ENCODE measurements at regions of chr7 and their contacts with region 1.

Region 1: GRCh38 chr7:139230774-139231512 is at the start of gene UBN2:
- DNase-seq: peak; percentile 97
- H3K4me3 Mint-ChIP-seq: peak within 1 kb of the TSS; percentile 97
- H3K27ac Mint-ChIP-seq: peak within 1 kb of the TSS; percentile 90
- H3K4me1 Mint-ChIP-seq: peaks cover 27% of the 10 kb centered on the region
- H3K27me3 Mint-ChIP-seq: peaks cover 5% of the 10 kb centered on the region
- total RNA-seq, gene UBN2: 11.3 to 13.3 TPM

Region 2: GRCh38 chr7:139068544-139069399 is 162.2 kb before region 1 on chr7:
- CTCF ChIA-PET with region 1: no interaction called
- POLR2A ChIA-PET with region 1: no interaction called
- intact Hi-C with region 1: loop called (anchors 1 kb)
- DNase-seq: peak; percentile 30
- H3K4me3 Mint-ChIP-seq: no peak overlapping the region
- H3K27ac Mint-ChIP-seq: peak overlapping the region; percentile 53
- H3K4me1 Mint-ChIP-seq: peaks cover 58% of the 10 kb centered on the region
- H3K27me3 Mint-ChIP-seq: no peaks in the 10 kb centered on the region

Region 3: DNA sequence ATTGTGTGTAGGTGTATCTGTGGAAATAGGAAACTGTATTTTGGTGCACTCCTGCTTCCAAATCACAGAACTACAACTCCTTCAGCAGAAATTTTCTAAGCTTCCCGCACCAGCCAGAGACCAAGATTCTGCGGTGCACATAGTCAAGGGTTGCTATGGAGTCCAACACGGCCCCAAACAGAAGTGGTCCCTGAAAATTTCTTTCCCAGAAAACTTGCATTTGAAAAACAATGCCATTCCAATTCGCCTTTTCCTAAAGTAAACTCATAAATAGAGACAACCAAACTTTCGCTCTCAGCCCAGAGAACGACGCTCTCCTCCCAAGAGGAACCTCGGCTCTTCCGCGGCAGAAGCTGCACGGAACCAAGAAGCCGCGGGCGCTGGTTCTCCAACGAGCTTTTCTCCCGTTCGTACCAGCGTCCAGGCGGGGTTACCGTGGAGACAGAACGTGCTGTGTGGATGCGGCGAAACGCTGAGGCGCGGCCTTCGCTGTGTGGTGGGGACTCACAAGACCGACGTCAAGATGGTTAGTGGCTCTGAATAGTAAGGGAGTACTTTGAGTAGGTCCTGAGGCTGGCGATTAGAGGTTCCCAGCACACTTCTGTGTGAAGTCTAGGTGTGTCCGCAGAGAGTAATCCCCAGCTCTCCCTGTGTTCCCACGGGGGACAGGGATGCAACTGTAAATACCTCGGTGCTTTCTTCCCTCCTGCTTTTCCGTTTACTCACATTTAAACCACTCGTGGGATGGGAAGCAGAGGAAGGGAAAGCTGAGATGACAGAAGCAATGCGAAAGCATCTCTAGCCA is 97.4 kb before region 1 on chr7:
- CTCF ChIA-PET with region 1: no interaction called
- POLR2A ChIA-PET with region 1: interaction called, 3 read pairs
- intact Hi-C with region 1: loop called (anchors 1 kb)
- DNase-seq: peak; percentile 93
- H3K4me3 Mint-ChIP-seq: peak overlapping the region; percentile 76
- H3K27ac Mint-ChIP-seq: peak overlapping the region; percentile 59
- H3K4me1 Mint-ChIP-seq: peaks cover 18% of the 10 kb centered on the region
- H3K27me3 Mint-ChIP-seq: no peaks in the 10 kb centered on the region

Region 4: GRCh38 chr7:139340037-139340807 is 109.3 kb after region 1 on chr7:
- CTCF ChIA-PET with region 1: interaction called, 8 read pairs
- POLR2A ChIA-PET with region 1: no interaction called
- intact Hi-C with region 1: loop called (anchors 1 kb)
- DNase-seq: peak; percentile 99
- H3K4me3 Mint-ChIP-seq: peak overlapping the region; percentile 86
- H3K27ac Mint-ChIP-seq: peak overlapping the region; percentile 99
- H3K4me1 Mint-ChIP-seq: peaks cover 27% of the 10 kb centered on the region
- H3K27me3 Mint-ChIP-seq: peaks cover 4% of the 10 kb centered on the region